H1 (cell line): ENCODE measurements at regions of chr9 and their contacts with region 1.

Region 1: DNA sequence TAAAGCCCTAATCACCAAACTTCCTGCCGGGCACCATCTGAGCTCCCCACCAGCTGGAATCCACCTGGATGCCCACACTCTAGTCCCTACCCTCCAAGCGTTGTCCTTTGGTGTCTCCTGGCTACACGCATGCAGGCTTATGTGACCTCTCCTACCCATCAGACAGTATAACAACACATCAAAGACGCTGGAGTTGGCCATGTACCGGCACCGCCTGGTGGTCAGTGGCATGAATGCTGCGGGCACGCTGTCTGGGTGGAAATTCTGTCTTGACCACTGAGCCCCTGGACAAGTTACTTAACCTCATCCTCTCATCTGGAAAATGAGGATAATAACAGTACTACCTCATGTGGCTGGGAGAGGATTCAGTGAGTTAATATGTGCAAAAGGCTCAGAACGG is 23.4 kb upstream of the CORO2A start:
- DNase-seq: peak in 1 of 2 experiments; percentile 74
- H3K4me3 ChIP-seq: no peak overlapping the region
- H3K27ac ChIP-seq: no peak overlapping the region
- H3K4me1 ChIP-seq: peaks cover 7 to 25% (median 15%) of the 10 kb centered on the region in 4 experiments
- H3K27me3 ChIP-seq: no peaks in the 10 kb centered on the region
- CTCF ChIP-seq: peak; percentile 75 to 94 (median 87)
- EP300 ChIP-seq: no peak
- POLR2A ChIP-seq: no peak
- RAD21 ChIP-seq: peak; percentile 66 to 73

Region 2: GRCh38 chr9:98231770-98232478 is 16.1 kb after region 1 on chr9:
- CTCF ChIA-PET with region 1: interaction called, 22 read pairs
- POLR2A ChIA-PET with region 1: interaction called, 6 read pairs
- DNase-seq: no peak
- H3K4me3 ChIP-seq: no peak overlapping the region
- H3K27ac ChIP-seq: no peak overlapping the region
- H3K4me1 ChIP-seq: no peaks in the 10 kb centered on the region
- H3K27me3 ChIP-seq: no peaks in the 10 kb centered on the region
- CTCF ChIP-seq: no peak
- EP300 ChIP-seq: no peak
- POLR2A ChIP-seq: no peak
- RAD21 ChIP-seq: no peak

Region 3: GRCh38 chr9:98255578-98256296 is 39.9 kb after region 1 on chr9 and contains the start of gene TBC1D2:
- CTCF ChIA-PET with region 1: interaction called, 7 read pairs
- POLR2A ChIA-PET with region 1: interaction called, 27 read pairs
- DNase-seq: peak; percentile 82 to 99
- H3K4me3 ChIP-seq: peak within 1 kb of the TSS; percentile 80 to 93 (median 88)
- H3K27ac ChIP-seq: peak within 1 kb of the TSS; percentile 94
- H3K4me1 ChIP-seq: peaks cover 0 to 4% (median 1%) of the 10 kb centered on the region in 4 experiments; a peak in 5 of 7 replicates
- H3K27me3 ChIP-seq: no peaks in the 10 kb centered on the region
- CTCF ChIP-seq: no peak
- EP300 ChIP-seq: no peak
- POLR2A ChIP-seq: no peak; a peak in 1 of 3 replicates
- RAD21 ChIP-seq: no peak
- total RNA-seq, gene TBC1D2: 7.4 and 8.0 TPM in 2 replicates

Region 4: GRCh38 chr9:98271479-98271878 is 55.7 kb after region 1 on chr9:
- CTCF ChIA-PET with region 1: no interaction called
- POLR2A ChIA-PET with region 1: no interaction called
- DNase-seq: no peak
- H3K4me3 ChIP-seq: no peak overlapping the region
- H3K27ac ChIP-seq: no peak overlapping the region
- H3K4me1 ChIP-seq: no peaks in the 10 kb centered on the region; a peak in 2 of 7 replicates
- H3K27me3 ChIP-seq: no peaks in the 10 kb centered on the region
- CTCF ChIP-seq: no peak
- EP300 ChIP-seq: no peak
- POLR2A ChIP-seq: no peak
- RAD21 ChIP-seq: no peak

Region 5: GRCh38 chr9:98289614-98290201 is 73.9 kb after region 1 on chr9:
- CTCF ChIA-PET with region 1: no interaction called
- POLR2A ChIA-PET with region 1: no interaction called
- DNase-seq: no peak
- H3K4me3 ChIP-seq: no peak overlapping the region
- H3K27ac ChIP-seq: no peak overlapping the region
- H3K4me1 ChIP-seq: no peaks in the 10 kb centered on the region
- H3K27me3 ChIP-seq: peaks cover 0 to 2% (median 0%) of the 10 kb centered on the region in 4 experiments; a peak in 1 of 7 replicates
- CTCF ChIP-seq: no peak
- EP300 ChIP-seq: no peak
- POLR2A ChIP-seq: no peak
- RAD21 ChIP-seq: no peak